ENCODE measurements at regions of chr15 and their contacts with region 1.

Region 1: DNA sequence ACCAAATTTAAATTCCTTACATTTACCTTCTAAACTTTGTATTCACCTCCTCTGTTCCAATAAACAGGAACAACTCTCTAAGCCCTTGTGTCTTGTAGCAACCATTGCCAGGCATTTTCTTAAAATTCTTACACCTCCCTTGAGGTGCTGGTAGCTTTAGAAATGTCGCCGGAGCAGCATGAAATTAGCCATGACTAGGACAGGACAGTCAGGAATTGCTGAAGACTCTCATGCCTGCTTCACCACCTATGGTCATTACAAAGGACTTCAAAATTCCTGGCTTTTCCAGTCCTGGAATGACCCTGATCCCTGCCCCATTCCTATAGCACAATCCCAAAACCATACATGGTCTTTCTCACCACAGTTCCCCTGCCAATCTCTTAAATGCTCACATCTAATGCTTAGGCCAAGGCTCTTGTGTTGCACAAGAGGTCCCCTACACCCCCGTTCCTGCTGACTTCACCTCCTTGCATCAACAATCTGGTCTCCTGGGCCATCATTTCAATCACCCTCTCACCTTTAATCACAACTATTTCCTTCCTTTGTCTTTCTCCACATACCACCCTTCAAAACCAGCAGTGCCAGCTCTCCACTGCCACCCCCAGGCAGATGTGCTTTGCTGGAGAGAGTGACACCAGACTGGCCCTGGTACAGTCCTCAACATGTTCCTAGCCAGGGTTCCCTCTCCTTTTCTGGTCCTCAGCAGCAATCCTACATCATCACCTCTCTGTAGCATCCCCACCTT is 113.2 kb upstream of the TJP1 start:
- DNase-seq: no peak
- H3K4me3 ChIP-seq: no peak overlapping the region
- H3K27ac ChIP-seq: peak overlapping the region; percentile 63
- H3K4me1 ChIP-seq: peaks cover 55% of the 10 kb centered on the region
- H3K27me3 ChIP-seq: no peaks in the 10 kb centered on the region
- CTCF ChIP-seq: peak in 1 of 2 donors; percentile 30

Region 2: GRCh38 chr15:29756358-29757267 is 178.8 kb before region 1 on chr15:
- CTCF ChIA-PET with region 1: no interaction called
- dilution Hi-C with region 1: no loop called
- in situ Hi-C with region 1: no loop called
- intact Hi-C with region 1: loop called (anchors 5 kb)
- DNase-seq: peak; percentile 87
- H3K4me3 ChIP-seq: peak overlapping the region in 1 of 3 experiments; percentile 14
- H3K27ac ChIP-seq: peak overlapping the region; percentile 69
- H3K4me1 ChIP-seq: peaks cover 21% of the 10 kb centered on the region
- H3K27me3 ChIP-seq: no peaks in the 10 kb centered on the region
- CTCF ChIP-seq: no peak

Region 3: DNA sequence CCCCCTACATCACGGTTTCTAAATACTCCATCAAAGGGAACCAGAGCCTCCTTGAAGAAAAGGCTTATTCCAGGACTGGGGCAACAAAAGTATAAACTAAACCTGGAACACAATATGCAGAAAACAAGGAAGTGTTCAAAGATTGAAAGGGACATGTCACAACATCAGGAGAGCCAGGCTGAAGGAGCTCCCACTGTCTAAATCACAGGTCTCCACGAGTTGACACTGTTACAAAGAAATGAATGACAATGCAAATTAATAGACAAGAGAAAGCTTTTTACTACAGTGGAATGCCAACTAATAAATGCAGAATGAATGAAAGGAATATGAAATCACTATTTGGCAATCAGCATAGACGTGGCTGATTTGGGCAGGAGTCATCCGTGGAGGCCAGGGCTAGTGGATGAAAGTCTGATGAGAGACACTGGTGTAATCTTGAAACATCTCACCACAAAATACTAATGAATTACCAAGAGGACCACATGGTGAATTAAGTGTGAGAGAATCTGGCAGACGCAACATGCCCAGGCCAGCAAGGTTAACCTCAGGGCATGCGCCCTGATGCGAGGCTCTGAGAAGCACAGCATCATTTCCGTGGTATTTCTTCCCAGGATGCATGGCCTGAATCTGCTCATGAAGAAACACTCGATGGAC is 10.6 kb after region 1 on chr15:
- CTCF ChIA-PET with region 1: no interaction called
- dilution Hi-C with region 1: no loop called
- in situ Hi-C with region 1: no loop called
- intact Hi-C with region 1: loop called (anchors 1 kb)
- DNase-seq: peak; percentile 97
- H3K4me3 ChIP-seq: no peak overlapping the region
- H3K27ac ChIP-seq: peak overlapping the region; percentile 80
- H3K4me1 ChIP-seq: peaks cover 19% of the 10 kb centered on the region
- H3K27me3 ChIP-seq: no peaks in the 10 kb centered on the region
- CTCF ChIP-seq: no peak

Region 4: DNA sequence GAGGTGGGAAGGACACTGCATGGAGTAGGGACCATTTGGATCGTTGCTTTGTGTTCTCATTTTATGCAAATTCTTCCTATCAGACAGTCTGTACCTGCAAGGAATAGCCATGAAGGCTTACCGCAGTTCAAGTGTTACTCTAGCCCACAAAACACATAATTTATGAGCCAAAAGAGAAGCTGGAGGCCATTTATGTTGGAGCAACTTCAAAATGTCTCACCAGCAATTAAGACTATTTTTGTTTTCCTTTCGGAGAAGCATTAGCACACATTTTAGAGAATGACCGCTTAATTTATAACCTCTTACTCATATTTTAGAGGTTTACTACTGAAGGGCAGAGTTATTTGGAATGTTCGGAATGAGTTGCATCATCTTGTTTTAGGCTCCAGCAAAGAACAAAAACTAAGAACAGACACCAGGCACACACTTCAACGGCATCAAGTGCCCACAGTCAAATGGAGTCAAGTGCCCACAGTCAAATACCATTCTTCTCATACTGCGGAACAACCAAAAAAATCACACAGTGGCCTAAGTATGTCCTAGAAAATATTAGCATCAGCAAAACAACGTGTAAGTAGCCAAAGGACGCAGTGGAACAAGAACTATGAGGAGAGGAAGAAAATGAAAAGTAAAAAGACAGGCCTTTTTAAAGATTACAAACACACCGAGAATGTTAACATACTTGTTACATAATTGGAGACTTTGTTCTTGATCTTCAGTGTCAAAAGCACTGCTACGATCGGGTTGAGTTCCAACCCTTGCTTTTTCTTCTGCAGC is 129.8 kb after region 1 on chr15:
- CTCF ChIA-PET with region 1: no interaction called
- dilution Hi-C with region 1: no loop called
- in situ Hi-C with region 1: no loop called
- intact Hi-C with region 1: loop called (anchors 10 kb)
- DNase-seq: peak; percentile 85
- H3K4me3 ChIP-seq: no peak overlapping the region
- H3K27ac ChIP-seq: peak overlapping the region; percentile 25
- H3K4me1 ChIP-seq: peaks cover 12% of the 10 kb centered on the region
- H3K27me3 ChIP-seq: no peaks in the 10 kb centered on the region
- CTCF ChIP-seq: no peak

Measured in mammary epithelial cell (primary cell).